ENCODE measurements at regions of chr2 and their contacts with region 1.

Region 1: DNA sequence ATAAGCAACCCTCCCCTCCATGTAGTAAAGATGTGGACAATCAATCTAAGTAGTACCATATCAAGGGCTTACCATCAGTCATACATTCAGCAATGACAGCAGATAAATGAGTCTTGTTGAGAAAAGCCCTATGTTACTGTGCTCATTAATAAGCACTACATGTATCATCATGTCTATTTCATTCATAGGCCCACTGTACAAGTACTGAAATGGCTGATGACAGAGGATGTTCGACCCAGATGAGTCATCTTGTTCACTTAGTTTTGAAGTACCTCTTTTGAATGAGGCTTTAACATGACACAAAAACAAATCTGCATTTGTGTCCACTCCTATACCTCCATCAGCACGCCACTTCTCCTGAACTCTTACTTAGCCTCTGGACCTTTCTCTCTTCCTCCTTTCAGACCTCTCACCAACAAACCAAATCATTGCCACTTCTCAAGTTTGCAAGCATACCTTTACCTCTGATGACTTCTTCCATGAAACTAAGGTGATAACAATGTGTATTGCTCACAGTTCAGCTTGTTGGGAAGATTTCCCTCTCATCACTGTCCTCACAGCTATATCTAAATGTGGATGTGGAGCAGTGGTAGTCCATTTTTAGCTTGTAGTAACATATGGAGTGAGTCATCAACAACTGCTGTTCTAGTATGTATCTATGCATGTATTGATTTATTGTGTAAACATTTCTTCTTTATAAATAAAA is 921.0 kb upstream of the SLC39A10 start:
- DNase-seq: peak; percentile 5
- ATAC-seq: peak; percentile 20; the same call in 1 of the 2 replicates
- H3K4me3 ChIP-seq: no peak overlapping the region
- H3K27ac ChIP-seq: no peak overlapping the region
- H3K4me1 ChIP-seq: no peaks in the 10 kb centered on the region
- H3K27me3 ChIP-seq: no peaks in the 10 kb centered on the region
- CTCF ChIP-seq: no peak

Region 2: DNA sequence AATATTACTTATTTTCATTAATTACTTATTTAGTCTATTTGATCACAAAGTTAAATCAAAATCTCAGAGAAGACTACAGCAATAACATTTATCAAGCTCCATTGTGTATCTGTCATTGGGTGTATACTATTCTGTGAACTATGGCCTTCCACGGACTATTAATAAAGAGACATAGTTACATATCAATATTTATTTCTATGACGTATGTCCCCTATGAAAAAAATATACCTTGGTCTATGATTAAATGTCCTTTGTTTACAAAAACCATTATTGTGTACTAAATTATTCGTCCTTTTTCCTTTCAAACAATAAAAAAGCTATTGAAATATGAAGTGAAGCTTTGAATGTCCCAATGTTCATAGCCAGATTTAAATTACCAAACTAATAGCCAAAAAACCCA is 25.1 kb after region 1 on chr2:
- CTCF ChIA-PET with region 1: interaction called, 13 read pairs
- POLR2A ChIA-PET with region 1: no interaction called
- intact Hi-C with region 1: no loop called
- DNase-seq: no peak
- ATAC-seq: no peak
- H3K4me3 ChIP-seq: no peak overlapping the region
- H3K27ac ChIP-seq: no peak overlapping the region
- H3K4me1 ChIP-seq: no peaks in the 10 kb centered on the region
- H3K27me3 ChIP-seq: no peaks in the 10 kb centered on the region
- CTCF ChIP-seq: no peak

Region 3: DNA sequence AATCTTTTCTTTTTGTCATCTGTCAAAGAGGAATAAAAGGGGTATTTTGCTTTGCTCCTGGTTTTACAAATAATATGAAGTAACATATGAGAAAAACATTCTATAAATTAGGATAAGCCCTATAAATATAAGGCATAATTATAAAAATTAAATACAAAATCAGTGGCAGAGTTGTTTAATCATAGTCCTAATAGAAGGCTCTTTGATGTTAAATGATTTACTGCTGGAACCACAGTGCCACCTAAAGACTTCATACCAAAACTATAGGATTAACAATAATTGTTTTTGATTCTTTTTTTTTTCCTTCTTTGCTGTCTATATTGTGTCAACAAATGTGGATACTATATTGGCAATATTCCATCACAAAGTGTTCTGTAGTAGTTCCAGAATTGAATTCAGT is 83.4 kb after region 1 on chr2:
- CTCF ChIA-PET with region 1: no interaction called
- POLR2A ChIA-PET with region 1: no interaction called
- intact Hi-C with region 1: no loop called
- DNase-seq: peak; percentile 32
- ATAC-seq: peak; percentile 38; the same call in 1 of the 2 replicates
- H3K4me3 ChIP-seq: no peak overlapping the region
- H3K27ac ChIP-seq: no peak overlapping the region
- H3K4me1 ChIP-seq: no peaks in the 10 kb centered on the region; the same call in 1 of the 2 replicates
- H3K27me3 ChIP-seq: no peaks in the 10 kb centered on the region
- CTCF ChIP-seq: peak; percentile 56

Region 4: GRCh38 chr2:194842871-194843270 is 106.9 kb after region 1 on chr2:
- CTCF ChIA-PET with region 1: no interaction called
- POLR2A ChIA-PET with region 1: no interaction called
- intact Hi-C with region 1: no loop called
- DNase-seq: no peak
- ATAC-seq: no peak
- H3K4me3 ChIP-seq: no peak overlapping the region
- H3K27ac ChIP-seq: no peak overlapping the region
- H3K4me1 ChIP-seq: no peaks in the 10 kb centered on the region
- H3K27me3 ChIP-seq: no peaks in the 10 kb centered on the region
- CTCF ChIP-seq: no peak